ENCODE measurements at regions of chr2 and their contacts with region 1.

Region 1: DNA sequence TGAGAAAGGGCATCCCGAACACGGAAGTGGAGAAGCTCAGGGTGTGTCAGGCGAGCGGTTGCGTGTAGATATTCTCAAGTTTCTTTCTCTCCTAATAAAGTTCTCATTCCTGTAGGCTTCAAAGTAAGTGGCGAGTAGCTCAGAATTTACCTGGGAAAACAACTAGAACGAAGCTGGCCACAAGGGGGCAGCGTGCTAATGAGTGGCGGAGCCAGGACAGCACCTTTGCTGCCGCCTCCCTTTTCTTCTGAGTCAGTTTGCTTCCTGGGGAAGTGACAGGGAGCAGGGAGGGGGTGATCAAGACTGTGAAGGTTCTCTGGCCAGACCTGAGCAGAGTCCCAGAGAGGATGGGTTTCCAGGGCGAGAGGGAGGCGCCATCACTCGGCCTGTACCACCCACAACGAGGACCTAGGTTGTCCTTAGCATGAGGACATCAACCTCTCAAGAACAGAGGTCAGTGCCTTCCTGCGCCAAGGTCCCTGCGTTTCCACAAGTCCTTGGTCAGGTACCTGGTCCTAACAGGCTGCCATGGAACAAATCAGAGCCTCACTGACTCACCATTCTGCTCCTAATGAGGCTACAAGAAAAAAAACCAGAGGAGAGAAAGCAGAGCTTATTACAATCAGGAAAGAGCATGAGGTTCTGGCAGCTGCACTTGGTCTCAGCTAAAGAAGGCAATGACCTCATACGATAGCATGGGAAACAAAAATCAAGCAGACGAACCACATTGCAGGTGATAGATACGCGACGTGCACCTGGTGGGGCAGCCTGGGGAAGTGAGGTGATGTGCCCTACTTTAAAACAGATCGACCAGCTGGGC is 98.6 kb downstream of the PLB1 start:
- DNase-seq: peak; percentile 92
- H3K4me3 ChIP-seq: no peak overlapping the region
- H3K27ac ChIP-seq: peak overlapping the region; percentile 71
- H3K4me1 ChIP-seq: peaks cover 13% of the 10 kb centered on the region
- H3K27me3 ChIP-seq: no peaks in the 10 kb centered on the region
- CTCF ChIP-seq: peak; percentile 71 to 79
- POLR2A ChIP-seq: peak; percentile 41

Region 2: GRCh38 chr2:28423856-28424605 is 170.5 kb before region 1 on chr2:
- CTCF ChIA-PET with region 1: no interaction called
- POLR2A ChIA-PET with region 1: no interaction called
- dilution Hi-C with region 1: no loop called
- intact Hi-C with region 1: no loop called
- DNase-seq: no peak
- H3K4me3 ChIP-seq: no peak overlapping the region
- H3K27ac ChIP-seq: peak overlapping the region; percentile 41
- H3K4me1 ChIP-seq: peaks cover 14% of the 10 kb centered on the region
- H3K27me3 ChIP-seq: no peaks in the 10 kb centered on the region
- CTCF ChIP-seq: no peak
- POLR2A ChIP-seq: no peak

Region 3: GRCh38 chr2:28558158-28558820 is 36.2 kb before region 1 on chr2:
- CTCF ChIA-PET with region 1: interaction called, 10 read pairs
- POLR2A ChIA-PET with region 1: no interaction called
- dilution Hi-C with region 1: no loop called
- intact Hi-C with region 1: no loop called
- DNase-seq: no peak
- H3K4me3 ChIP-seq: no peak overlapping the region
- H3K27ac ChIP-seq: no peak overlapping the region
- H3K4me1 ChIP-seq: no peaks in the 10 kb centered on the region
- H3K27me3 ChIP-seq: no peaks in the 10 kb centered on the region
- CTCF ChIP-seq: no peak
- POLR2A ChIP-seq: no peak

Region 4: DNA sequence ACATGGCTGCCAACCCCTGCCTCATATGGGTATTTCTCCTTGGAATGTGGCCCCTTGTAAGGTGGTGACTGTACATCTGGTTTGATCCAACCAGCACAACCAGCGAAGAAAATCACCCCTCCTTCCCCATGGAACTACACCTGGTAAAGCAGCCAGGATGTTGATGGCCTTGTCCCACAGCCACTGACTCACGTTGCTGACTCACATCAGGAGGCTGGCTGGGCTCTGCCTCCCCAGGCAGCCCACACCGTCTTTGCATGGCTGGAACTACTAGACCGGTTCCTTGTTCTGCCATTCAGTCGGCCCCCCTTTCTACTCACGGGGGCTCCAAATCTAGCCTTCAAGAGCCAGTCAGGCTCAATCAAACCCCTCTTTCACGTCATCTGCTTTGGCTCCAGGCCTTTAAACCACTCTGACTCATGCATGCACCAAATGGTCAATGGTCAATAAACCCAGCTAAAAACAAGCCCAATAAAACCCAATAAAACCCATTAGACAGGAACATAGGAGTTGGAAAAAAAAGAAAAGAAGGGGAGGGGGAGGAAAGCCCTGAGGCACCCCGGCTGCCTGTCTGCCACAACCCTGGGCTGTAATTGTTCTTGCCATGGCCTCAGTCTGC is 16.2 kb after region 1 on chr2:
- CTCF ChIA-PET with region 1: interaction called, 129 read pairs
- POLR2A ChIA-PET with region 1: no interaction called
- dilution Hi-C with region 1: no loop called
- intact Hi-C with region 1: loop called (anchors 1 kb)
- DNase-seq: peak; percentile 92
- H3K4me3 ChIP-seq: no peak overlapping the region
- H3K27ac ChIP-seq: peak overlapping the region; percentile 76
- H3K4me1 ChIP-seq: peaks cover 38% of the 10 kb centered on the region
- H3K27me3 ChIP-seq: no peaks in the 10 kb centered on the region
- CTCF ChIP-seq: no peak
- POLR2A ChIP-seq: no peak

Region 5: GRCh38 chr2:28628987-28629386 is 34.5 kb after region 1 on chr2:
- CTCF ChIA-PET with region 1: interaction called, 11 read pairs
- POLR2A ChIA-PET with region 1: no interaction called
- dilution Hi-C with region 1: no loop called
- intact Hi-C with region 1: no loop called
- DNase-seq: no peak
- H3K4me3 ChIP-seq: no peak overlapping the region
- H3K27ac ChIP-seq: no peak overlapping the region
- H3K4me1 ChIP-seq: no peaks in the 10 kb centered on the region
- H3K27me3 ChIP-seq: no peaks in the 10 kb centered on the region
- CTCF ChIP-seq: no peak
- POLR2A ChIP-seq: no peak

Region 6: GRCh38 chr2:28643911-28644334 is 49.4 kb after region 1 on chr2:
- CTCF ChIA-PET with region 1: no interaction called
- POLR2A ChIA-PET with region 1: no interaction called
- dilution Hi-C with region 1: no loop called
- intact Hi-C with region 1: no loop called
- DNase-seq: peak; percentile 32
- H3K4me3 ChIP-seq: no peak overlapping the region
- H3K27ac ChIP-seq: no peak overlapping the region
- H3K4me1 ChIP-seq: peaks cover 6% of the 10 kb centered on the region
- H3K27me3 ChIP-seq: no peaks in the 10 kb centered on the region
- CTCF ChIP-seq: no peak
- POLR2A ChIP-seq: no peak

Region 7: DNA sequence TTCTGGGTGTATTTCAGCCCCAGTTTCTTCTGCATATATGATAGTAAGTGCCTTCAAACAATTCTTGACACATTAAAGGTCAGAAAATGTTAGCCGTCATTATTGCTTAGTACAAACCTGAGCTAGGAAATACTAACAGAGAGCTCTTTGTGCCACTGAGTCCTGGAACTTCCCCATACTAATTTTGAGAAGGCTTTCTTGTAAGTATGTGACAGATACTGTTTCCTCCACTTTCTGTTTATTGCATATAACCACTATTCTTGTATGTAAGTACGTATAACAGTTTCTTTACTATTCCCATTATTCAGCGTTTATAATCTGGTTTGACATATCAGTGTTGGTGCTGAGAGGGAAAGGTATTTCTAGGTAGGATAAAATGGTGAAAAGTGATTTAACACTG is 166.9 kb after region 1 on chr2:
- CTCF ChIA-PET with region 1: interaction called, 153 read pairs
- POLR2A ChIA-PET with region 1: no interaction called
- dilution Hi-C with region 1: no loop called
- intact Hi-C with region 1: no loop called
- DNase-seq: no peak
- H3K4me3 ChIP-seq: no peak overlapping the region
- H3K27ac ChIP-seq: no peak overlapping the region
- H3K4me1 ChIP-seq: no peaks in the 10 kb centered on the region
- H3K27me3 ChIP-seq: no peaks in the 10 kb centered on the region
- CTCF ChIP-seq: no peak
- POLR2A ChIP-seq: no peak

Region 8: DNA sequence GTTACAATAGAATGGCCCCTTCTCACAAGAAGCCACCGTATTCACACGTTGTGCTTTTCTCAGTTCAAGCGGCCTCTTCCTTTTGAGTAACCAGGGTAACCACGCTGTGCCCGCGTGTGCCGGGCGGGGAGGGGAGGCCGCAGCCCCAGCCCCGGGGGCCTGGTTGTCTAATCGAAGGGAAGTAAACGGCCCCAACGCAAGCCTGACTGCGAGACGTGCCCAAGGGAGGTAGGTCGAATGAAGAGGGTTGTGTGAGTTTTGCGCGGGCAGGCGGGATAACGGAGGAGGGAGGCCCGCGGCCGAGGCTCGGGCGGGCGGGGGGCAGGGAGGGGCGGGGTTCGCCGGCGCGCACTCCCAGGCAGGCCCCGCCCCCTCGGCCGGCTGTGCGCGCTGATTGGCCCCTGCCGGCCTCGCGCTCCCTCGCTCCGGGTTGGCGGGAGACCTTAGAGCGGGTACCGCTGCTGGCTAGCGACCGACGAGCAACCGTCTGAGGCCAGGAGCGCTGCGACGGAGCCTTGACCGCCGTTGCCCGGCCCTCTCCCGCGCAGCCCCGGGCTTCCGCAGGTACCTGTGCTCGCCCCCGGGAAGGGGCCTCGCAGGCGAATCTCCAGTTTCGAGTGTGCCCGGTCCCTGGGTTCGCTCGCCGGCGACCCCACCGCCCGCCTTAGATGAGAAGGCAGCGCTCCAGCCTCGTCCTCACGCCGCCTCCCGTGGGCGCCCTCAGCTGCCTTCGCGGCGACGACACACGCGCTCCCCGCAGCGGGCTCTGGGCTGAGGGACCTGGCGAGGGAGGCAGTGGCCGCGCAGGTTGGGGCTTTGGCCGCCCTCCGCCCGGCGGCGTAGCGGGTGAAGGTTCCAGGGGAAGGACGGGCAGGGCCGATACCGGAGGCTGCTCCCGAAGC is 216.1 kb after region 1 on chr2 and contains the start of gene SPDYA:
- CTCF ChIA-PET with region 1: interaction called, 8 read pairs
- POLR2A ChIA-PET with region 1: no interaction called
- dilution Hi-C with region 1: no loop called
- intact Hi-C with region 1: loop called (anchors 5 kb)
- DNase-seq: peak; percentile 73
- H3K4me3 ChIP-seq: peak within 1 kb of the TSS in 2 of 3 experiments; percentile 5 to 44
- H3K27ac ChIP-seq: no peak within 1 kb of the TSS
- H3K4me1 ChIP-seq: peaks cover 10% of the 10 kb centered on the region
- H3K27me3 ChIP-seq: no peaks in the 10 kb centered on the region
- CTCF ChIP-seq: no peak
- POLR2A ChIP-seq: no peak
- total RNA-seq, gene SPDYA: 0.92 and 1.6 TPM in 2 replicates

Region 9: GRCh38 chr2:28842042-28842441 is 247.5 kb after region 1 on chr2:
- CTCF ChIA-PET with region 1: no interaction called
- POLR2A ChIA-PET with region 1: no interaction called
- dilution Hi-C with region 1: no loop called
- intact Hi-C with region 1: no loop called
- DNase-seq: no peak
- H3K4me3 ChIP-seq: no peak overlapping the region
- H3K27ac ChIP-seq: no peak overlapping the region
- H3K4me1 ChIP-seq: peaks cover 3% of the 10 kb centered on the region
- H3K27me3 ChIP-seq: no peaks in the 10 kb centered on the region
- CTCF ChIP-seq: no peak
- POLR2A ChIP-seq: no peak

Measured in endothelial cell of umbilical vein (primary cell).